Activated CD4-positive, alpha-beta T cell treated with anti-CD3 and anti-CD28 coated beads for 36 hours (primary cell): ENCODE measurements at regions of chrX and their contacts with region 1.

Region 1: GRCh38 chrX:1239681-1240142 is 27.3 kb upstream of the CRLF2 start:
- DNase-seq: peak; percentile 42
- ATAC-seq: no peak
- H3K4me3 Mint-ChIP-seq: no peak overlapping the region
- H3K27ac Mint-ChIP-seq: no peak overlapping the region
- H3K4me1 Mint-ChIP-seq: peaks cover 17% of the 10 kb centered on the region
- H3K27me3 Mint-ChIP-seq: no peaks in the 10 kb centered on the region

Region 2: DNA sequence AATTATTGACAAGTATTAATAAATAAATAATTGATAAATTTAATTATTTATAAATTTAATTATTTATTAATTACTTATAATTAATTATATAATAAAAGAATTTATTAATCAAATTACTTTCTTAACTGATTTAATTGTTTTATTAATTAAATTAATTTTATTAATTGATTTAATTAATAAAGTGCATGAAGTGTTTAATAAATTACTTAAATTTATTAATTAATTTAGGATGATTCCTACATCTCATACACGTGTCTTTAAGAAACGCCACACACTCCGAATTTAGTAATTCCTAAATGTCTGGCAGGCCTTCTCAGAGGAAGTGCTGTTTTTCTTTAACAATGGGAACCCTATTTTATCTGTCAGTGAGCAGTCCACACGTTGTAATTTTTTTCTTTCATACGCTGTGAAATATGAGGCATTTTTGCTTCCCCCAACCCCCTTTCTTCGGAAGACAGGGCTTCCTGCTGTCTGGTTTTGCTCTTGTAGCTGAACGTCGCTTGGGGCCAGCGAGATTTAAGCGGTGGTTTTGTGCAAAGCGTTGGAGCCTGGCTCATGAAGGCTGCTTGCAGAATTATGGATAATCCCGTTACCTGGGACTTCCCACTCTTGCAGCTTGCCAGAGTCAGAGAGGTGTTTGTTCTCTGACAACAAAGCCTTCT is 74.0 kb before region 1 on chrX:
- CTCF ChIA-PET with region 1: no interaction called
- POLR2A ChIA-PET with region 1: no interaction called
- intact Hi-C with region 1: loop called in 1 of 2 experiments (anchors 5 kb)
- DNase-seq: peak; percentile 39
- ATAC-seq: peak; percentile 37
- H3K4me3 Mint-ChIP-seq: peak overlapping the region; percentile 30
- H3K27ac Mint-ChIP-seq: peak overlapping the region; percentile 31
- H3K4me1 Mint-ChIP-seq: peaks cover 10% of the 10 kb centered on the region
- H3K27me3 Mint-ChIP-seq: peaks cover 6% of the 10 kb centered on the region